ENCODE measurements at regions of chr6 and their contacts with region 1.

Region 1: DNA sequence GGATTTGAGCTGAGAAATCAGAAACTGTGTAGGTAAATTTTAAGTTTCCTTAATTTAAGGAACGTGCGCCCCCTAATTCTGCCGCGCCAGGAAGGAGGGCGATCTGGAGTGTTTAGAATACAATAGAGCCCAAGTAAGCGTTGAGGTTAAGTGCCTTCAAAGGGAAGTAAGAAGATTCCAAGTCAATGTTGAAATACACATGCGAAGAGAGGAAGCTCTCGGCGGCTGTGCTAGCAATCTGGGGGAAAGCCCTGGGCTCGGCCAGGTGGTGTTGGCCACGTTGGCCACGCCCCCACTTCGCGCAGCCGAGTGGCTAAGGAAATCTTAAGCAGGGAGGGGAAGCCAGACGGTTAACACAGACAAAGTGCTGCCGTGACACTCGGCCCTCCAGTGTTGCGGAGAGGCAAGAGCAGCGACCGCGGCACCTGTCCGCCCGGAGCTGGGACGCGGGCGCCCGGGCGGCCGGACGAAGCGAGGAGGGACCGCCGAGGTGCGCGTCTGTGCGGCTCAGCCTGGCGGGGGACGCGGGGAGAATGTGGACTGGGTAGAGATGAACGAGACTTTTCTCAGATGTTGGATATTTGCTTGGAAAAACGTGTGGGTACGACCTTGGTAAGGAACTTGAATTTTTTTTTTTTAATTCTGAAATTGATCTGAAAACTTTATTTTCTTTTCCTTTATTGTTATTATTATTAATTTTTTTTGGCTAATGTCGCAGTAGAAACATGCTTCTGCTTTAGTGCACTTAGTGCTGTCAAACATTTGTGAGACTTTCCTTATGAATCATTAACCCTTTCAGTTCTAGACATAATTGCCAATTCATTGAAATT is at the start of gene PRDM1:
- DNase-seq: peak; percentile 66 to 81 (median 74)
- H3K4me3 ChIP-seq: peak within 1 kb of the TSS; percentile 51
- H3K27ac ChIP-seq: peak within 1 kb of the TSS in 1 of 2 donors; percentile 59
- H3K4me1 ChIP-seq: peaks cover 2% of the 10 kb centered on the region
- H3K27me3 ChIP-seq: no peaks in the 10 kb centered on the region
- CTCF ChIP-seq: peak in 1 of 3 donors; percentile 11
- EP300 ChIP-seq: no peak
- POLR2A ChIP-seq: peak; percentile 20
- total RNA-seq, gene PRDM1: 3.5 to 10.6 (median 4.4) TPM

Region 2: GRCh38 chr6:105484238-105485161 is 601.7 kb before region 1 on chr6:
- intact Hi-C with region 1: loop called in 2 of 4 experiments (anchors 10 kb)
- DNase-seq: no peak
- H3K4me3 ChIP-seq: no peak overlapping the region
- H3K27ac ChIP-seq: no peak overlapping the region
- H3K4me1 ChIP-seq: peaks cover 5% of the 10 kb centered on the region
- H3K27me3 ChIP-seq: no peaks in the 10 kb centered on the region
- CTCF ChIP-seq: peak; percentile 77 to 97 (median 79)
- EP300 ChIP-seq: no peak
- POLR2A ChIP-seq: no peak

Region 3: GRCh38 chr6:105492706-105493673 is 593.2 kb before region 1 on chr6:
- intact Hi-C with region 1: loop called in 3 of 4 experiments (anchors 10 kb)
- DNase-seq: peak in 2 of 5 donors; percentile 26 to 33
- H3K4me3 ChIP-seq: no peak overlapping the region
- H3K27ac ChIP-seq: peak overlapping the region; percentile 33 to 74
- H3K4me1 ChIP-seq: peaks cover 13% of the 10 kb centered on the region
- H3K27me3 ChIP-seq: no peaks in the 10 kb centered on the region
- CTCF ChIP-seq: no peak
- EP300 ChIP-seq: no peak
- POLR2A ChIP-seq: no peak

Region 4: DNA sequence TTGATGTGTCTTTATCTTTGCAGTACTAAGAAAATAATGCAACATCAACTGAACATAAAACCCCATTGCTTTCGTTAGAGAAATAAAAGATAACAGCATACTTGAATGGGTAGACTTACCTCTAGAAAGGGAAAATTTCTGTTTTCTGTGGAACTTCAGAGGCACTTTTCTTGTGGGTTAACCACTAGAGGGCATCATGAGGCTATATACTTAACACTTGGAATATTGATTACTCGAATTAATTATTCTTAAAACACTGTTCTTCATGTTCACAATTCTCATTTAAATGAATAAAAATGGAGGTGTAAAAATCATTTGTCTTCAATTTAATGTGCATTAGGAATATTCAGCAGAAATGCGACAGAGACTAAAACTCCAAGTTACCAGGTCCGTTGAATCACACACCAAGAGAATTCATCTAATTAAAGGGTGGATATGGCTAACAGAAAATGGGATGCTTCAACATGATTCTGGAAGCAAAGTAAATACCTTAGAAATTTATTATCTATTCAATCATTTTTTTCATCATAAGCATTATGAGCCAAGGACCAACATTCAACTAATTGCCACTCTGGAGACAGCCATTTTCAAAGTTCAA is 352.5 kb before region 1 on chr6:
- intact Hi-C with region 1: loop called in 1 of 4 experiments (anchors 10 kb)
- DNase-seq: no peak
- H3K4me3 ChIP-seq: no peak overlapping the region
- H3K27ac ChIP-seq: no peak overlapping the region
- H3K4me1 ChIP-seq: no peaks in the 10 kb centered on the region
- H3K27me3 ChIP-seq: no peaks in the 10 kb centered on the region
- CTCF ChIP-seq: no peak
- EP300 ChIP-seq: no peak
- POLR2A ChIP-seq: no peak

Region 5: GRCh38 chr6:105992315-105992961 is 93.8 kb before region 1 on chr6:
- intact Hi-C with region 1: loop called in 2 of 4 experiments (anchors 10 kb)
- DNase-seq: peak; percentile 84 to 92 (median 87)
- H3K4me3 ChIP-seq: peak overlapping the region; percentile 68
- H3K27ac ChIP-seq: no peak overlapping the region
- H3K4me1 ChIP-seq: no peaks in the 10 kb centered on the region
- H3K27me3 ChIP-seq: no peaks in the 10 kb centered on the region
- CTCF ChIP-seq: peak in 1 of 3 donors; percentile 8
- EP300 ChIP-seq: no peak
- POLR2A ChIP-seq: peak; percentile 17